ENCODE measurements at regions of chr1 and their contacts with region 1.

Region 1: DNA sequence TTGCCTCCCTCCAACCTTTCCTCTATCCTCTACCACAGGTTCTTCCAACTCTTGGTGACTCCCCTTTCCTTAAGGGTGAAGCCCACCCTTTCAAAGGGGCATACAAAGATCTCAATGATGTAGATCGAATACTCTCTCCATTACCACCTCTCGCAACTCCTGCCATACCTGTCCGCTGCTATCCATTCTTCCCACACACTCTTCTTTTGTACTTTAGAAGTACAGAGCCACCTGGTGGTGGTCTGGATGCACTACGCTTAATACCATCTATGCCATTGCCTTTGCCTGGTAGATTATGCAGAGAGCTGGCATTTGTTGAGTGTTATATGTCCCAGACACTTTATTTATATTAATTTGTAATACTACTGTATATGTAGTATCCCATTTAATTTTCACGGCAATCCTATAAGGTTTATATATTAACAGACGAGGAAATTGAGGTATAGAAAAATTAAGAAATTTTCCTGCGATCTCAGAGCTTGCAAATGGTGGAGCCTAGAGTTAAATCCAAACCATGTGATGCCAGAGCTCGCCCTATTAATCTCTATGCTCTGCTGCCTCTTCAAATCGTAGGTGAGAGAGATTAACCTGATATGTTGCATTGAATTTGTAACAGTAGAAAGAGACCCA is 22.9 kb downstream of the TSHB start:
- DNase-seq: no peak
- ATAC-seq: peak; percentile 88
- H3K4me3 ChIP-seq: no peak overlapping the region
- H3K27ac ChIP-seq: no peak overlapping the region
- H3K4me1 ChIP-seq: no peaks in the 10 kb centered on the region
- H3K27me3 ChIP-seq: no peaks in the 10 kb centered on the region; a peak in 1 of 4 replicates
- CTCF ChIP-seq: peak; percentile 78 to 84 (median 81)
- EP300 ChIP-seq: no peak
- POLR2A ChIP-seq: no peak
- RAD21 ChIP-seq: peak; percentile 64

Region 2: GRCh38 chr1:114346480-114347029 is 706.0 kb before region 1 on chr1:
- CTCF ChIA-PET with region 1: interaction called, 15 read pairs
- POLR2A ChIA-PET with region 1: no interaction called
- RAD21 ChIA-PET with region 1: no interaction called
- SMC1A ChIA-PET with region 1: interaction called, 5 read pairs
- in situ Hi-C with region 1: loop called (anchors 10 kb)
- intact Hi-C with region 1: loop called (anchors 5 kb)
- DNase-seq: peak; percentile 70
- ATAC-seq: peak; percentile 100
- H3K4me3 ChIP-seq: peak overlapping the region; percentile 33; the same call in 1 of the 2 replicates
- H3K27ac ChIP-seq: no peak overlapping the region
- H3K4me1 ChIP-seq: peaks cover 6% of the 10 kb centered on the region; the same call in 1 of the 2 replicates
- H3K27me3 ChIP-seq: peaks cover 0 to 2% of the 10 kb centered on the region in 2 experiments; a peak in 2 of 4 replicates
- CTCF ChIP-seq: peak; percentile 100; a peak in 5 of 6 replicates
- EP300 ChIP-seq: no peak
- POLR2A ChIP-seq: no peak
- RAD21 ChIP-seq: peak; percentile 99

Region 3: DNA sequence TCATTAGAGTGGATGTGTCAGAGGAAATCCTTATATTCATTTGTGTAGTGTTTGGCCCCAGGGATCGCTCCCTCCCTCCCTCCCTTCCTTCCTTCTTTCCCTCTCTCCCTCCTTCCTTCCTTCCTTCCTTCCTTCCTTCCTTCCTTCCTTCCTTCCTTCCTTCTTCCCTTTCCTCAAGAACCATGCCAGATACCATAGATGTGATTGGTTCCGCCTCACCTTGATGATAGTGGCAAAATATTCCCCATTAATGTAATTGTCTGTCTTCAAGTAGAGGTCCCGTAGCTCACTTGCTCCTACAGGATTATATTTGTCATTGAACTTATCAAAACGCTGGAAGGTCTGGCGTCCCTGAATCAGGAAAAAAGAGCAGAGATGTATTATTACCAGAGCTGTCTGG is 374.9 kb before region 1 on chr1:
- CTCF ChIA-PET with region 1: no interaction called
- POLR2A ChIA-PET with region 1: no interaction called
- RAD21 ChIA-PET with region 1: no interaction called
- SMC1A ChIA-PET with region 1: no interaction called
- in situ Hi-C with region 1: no loop called
- intact Hi-C with region 1: no loop called
- DNase-seq: no peak
- ATAC-seq: no peak
- H3K4me3 ChIP-seq: no peak overlapping the region
- H3K27ac ChIP-seq: no peak overlapping the region
- H3K4me1 ChIP-seq: no peaks in the 10 kb centered on the region
- H3K27me3 ChIP-seq: no peaks in the 10 kb centered on the region; a peak in 1 of 4 replicates
- CTCF ChIP-seq: no peak
- EP300 ChIP-seq: no peak
- POLR2A ChIP-seq: no peak
- RAD21 ChIP-seq: no peak

Region 4: GRCh38 chr1:114884456-114884990 is 168.0 kb before region 1 on chr1:
- CTCF ChIA-PET with region 1: no interaction called
- POLR2A ChIA-PET with region 1: no interaction called
- RAD21 ChIA-PET with region 1: no interaction called
- SMC1A ChIA-PET with region 1: no interaction called
- in situ Hi-C with region 1: no loop called
- intact Hi-C with region 1: no loop called
- DNase-seq: no peak
- ATAC-seq: no peak
- H3K4me3 ChIP-seq: no peak overlapping the region
- H3K27ac ChIP-seq: no peak overlapping the region
- H3K4me1 ChIP-seq: no peaks in the 10 kb centered on the region
- H3K27me3 ChIP-seq: no peaks in the 10 kb centered on the region
- CTCF ChIP-seq: no peak
- EP300 ChIP-seq: no peak
- POLR2A ChIP-seq: no peak
- RAD21 ChIP-seq: no peak

Region 5: GRCh38 chr1:115035652-115036051 is 16.9 kb before region 1 on chr1:
- CTCF ChIA-PET with region 1: interaction called, 63 read pairs
- POLR2A ChIA-PET with region 1: no interaction called
- RAD21 ChIA-PET with region 1: interaction called, 4 read pairs
- SMC1A ChIA-PET with region 1: interaction called, 3 read pairs
- in situ Hi-C with region 1: no loop called
- intact Hi-C with region 1: no loop called
- DNase-seq: no peak
- ATAC-seq: no peak
- H3K4me3 ChIP-seq: no peak overlapping the region
- H3K27ac ChIP-seq: no peak overlapping the region
- H3K4me1 ChIP-seq: no peaks in the 10 kb centered on the region
- H3K27me3 ChIP-seq: no peaks in the 10 kb centered on the region
- CTCF ChIP-seq: no peak
- EP300 ChIP-seq: no peak
- POLR2A ChIP-seq: no peak
- RAD21 ChIP-seq: no peak

Region 6: GRCh38 chr1:115062542-115063011 is 10.0 kb after region 1 on chr1:
- CTCF ChIA-PET with region 1: interaction called, 52 read pairs
- POLR2A ChIA-PET with region 1: interaction called, 8 read pairs
- RAD21 ChIA-PET with region 1: interaction called, 8 read pairs
- SMC1A ChIA-PET with region 1: interaction called, 15 read pairs
- in situ Hi-C with region 1: no loop called
- intact Hi-C with region 1: no loop called
- DNase-seq: peak; percentile 23
- ATAC-seq: peak; percentile 98
- H3K4me3 ChIP-seq: no peak overlapping the region
- H3K27ac ChIP-seq: no peak overlapping the region
- H3K4me1 ChIP-seq: no peaks in the 10 kb centered on the region
- H3K27me3 ChIP-seq: no peaks in the 10 kb centered on the region
- CTCF ChIP-seq: no peak
- EP300 ChIP-seq: no peak
- POLR2A ChIP-seq: no peak
- RAD21 ChIP-seq: no peak

Region 7: GRCh38 chr1:115089420-115090185 is 37.0 kb after region 1 on chr1 and contains the start of gene TSPAN2:
- CTCF ChIA-PET with region 1: interaction called, 33 read pairs
- POLR2A ChIA-PET with region 1: no interaction called
- RAD21 ChIA-PET with region 1: interaction called, 6 read pairs
- SMC1A ChIA-PET with region 1: interaction called, 12 read pairs
- in situ Hi-C with region 1: no loop called
- intact Hi-C with region 1: no loop called
- DNase-seq: no peak
- ATAC-seq: peak; percentile 79
- H3K4me3 ChIP-seq: no peak within 1 kb of the TSS
- H3K27ac ChIP-seq: no peak within 1 kb of the TSS
- H3K4me1 ChIP-seq: no peaks in the 10 kb centered on the region
- H3K27me3 ChIP-seq: peaks cover 5 to 13% of the 10 kb centered on the region in 2 experiments
- CTCF ChIP-seq: no peak; a peak in 1 of 6 replicates
- EP300 ChIP-seq: no peak
- POLR2A ChIP-seq: no peak
- RAD21 ChIP-seq: no peak
- polyA plus RNA-seq, gene TSPAN2: not detected

Region 8: DNA sequence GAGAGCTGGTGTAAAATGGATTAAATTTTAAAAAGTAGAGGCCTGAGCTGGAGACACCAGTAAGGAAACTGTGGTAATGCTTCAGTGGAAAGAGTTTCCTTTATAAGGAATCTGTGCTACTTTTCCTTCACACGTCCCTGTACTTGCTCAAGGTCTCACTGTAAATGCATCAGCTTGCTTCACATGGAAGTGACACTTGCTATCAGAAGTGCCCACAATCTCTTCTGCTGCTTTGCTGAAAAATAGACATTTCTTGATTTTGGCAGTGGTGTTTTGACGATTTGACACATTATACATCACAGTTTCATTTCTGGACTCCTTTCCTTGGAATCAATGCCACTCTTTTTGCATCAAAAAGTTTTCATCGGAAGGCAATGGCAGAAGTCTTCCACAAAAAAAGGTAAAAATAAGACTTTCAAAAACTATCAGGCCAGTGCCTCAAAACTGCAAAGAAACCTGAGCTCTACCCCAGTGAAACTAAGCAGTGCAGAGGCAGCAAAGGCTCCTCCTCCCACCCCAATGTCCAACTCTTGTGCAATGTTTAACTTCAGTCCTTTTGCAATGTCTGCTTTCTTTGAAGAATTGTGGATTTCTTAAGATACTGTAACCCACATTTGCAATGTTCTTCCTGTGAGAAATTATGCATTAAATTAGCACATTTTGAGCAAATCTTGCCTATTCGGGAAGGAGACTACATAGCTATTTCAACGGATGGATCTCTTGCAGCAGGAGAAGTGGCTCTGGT is 55.1 kb after region 1 on chr1:
- CTCF ChIA-PET with region 1: interaction called, 138 read pairs
- POLR2A ChIA-PET with region 1: interaction called, 3 read pairs
- RAD21 ChIA-PET with region 1: interaction called, 43 read pairs
- SMC1A ChIA-PET with region 1: interaction called, 82 read pairs
- in situ Hi-C with region 1: no loop called
- intact Hi-C with region 1: loop called (anchors 1 kb)
- DNase-seq: no peak
- ATAC-seq: no peak
- H3K4me3 ChIP-seq: no peak overlapping the region
- H3K27ac ChIP-seq: no peak overlapping the region
- H3K4me1 ChIP-seq: no peaks in the 10 kb centered on the region
- H3K27me3 ChIP-seq: no peaks in the 10 kb centered on the region; a peak in 1 of 4 replicates
- CTCF ChIP-seq: no peak
- EP300 ChIP-seq: no peak
- POLR2A ChIP-seq: no peak
- RAD21 ChIP-seq: no peak

Region 9: DNA sequence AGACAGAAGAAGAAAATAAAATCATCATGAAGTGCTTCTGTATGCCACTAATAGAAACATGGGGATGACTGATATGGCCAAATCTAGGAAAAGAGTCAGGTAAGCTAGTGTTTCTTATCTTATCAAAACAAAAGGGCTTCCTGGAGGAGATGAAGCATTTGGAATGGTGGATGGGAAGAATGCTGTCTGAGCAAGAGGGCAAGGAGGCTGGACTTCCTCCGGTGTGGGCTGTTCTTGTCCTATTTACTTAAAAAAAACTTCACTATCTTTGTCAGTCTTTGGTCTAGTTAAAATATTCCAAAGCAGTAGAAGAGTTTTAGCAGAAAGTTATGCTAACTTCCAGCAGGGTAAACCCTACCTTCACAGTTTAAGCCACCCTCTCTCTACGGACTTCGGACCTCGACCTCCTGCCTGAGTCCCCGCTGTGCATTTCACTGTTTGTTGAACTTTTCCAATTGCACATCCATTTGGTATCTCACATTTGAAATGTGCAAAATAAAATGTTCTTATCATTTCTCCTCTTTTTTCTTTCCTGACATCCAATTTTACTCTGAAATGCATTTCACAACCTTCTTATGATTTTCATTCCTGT is 101.5 kb after region 1 on chr1:
- CTCF ChIA-PET with region 1: no interaction called
- POLR2A ChIA-PET with region 1: no interaction called
- RAD21 ChIA-PET with region 1: no interaction called
- SMC1A ChIA-PET with region 1: no interaction called
- in situ Hi-C with region 1: no loop called
- intact Hi-C with region 1: no loop called
- DNase-seq: no peak
- ATAC-seq: no peak
- H3K4me3 ChIP-seq: no peak overlapping the region
- H3K27ac ChIP-seq: no peak overlapping the region
- H3K4me1 ChIP-seq: no peaks in the 10 kb centered on the region
- H3K27me3 ChIP-seq: no peaks in the 10 kb centered on the region
- CTCF ChIP-seq: no peak
- EP300 ChIP-seq: no peak
- POLR2A ChIP-seq: no peak
- RAD21 ChIP-seq: no peak

Measured in GM12878 (cell line).